Heart left ventricle (tissue), 16 donors: ENCODE measurements at regions of chr10 and their contacts with region 1.

Region 1: DNA sequence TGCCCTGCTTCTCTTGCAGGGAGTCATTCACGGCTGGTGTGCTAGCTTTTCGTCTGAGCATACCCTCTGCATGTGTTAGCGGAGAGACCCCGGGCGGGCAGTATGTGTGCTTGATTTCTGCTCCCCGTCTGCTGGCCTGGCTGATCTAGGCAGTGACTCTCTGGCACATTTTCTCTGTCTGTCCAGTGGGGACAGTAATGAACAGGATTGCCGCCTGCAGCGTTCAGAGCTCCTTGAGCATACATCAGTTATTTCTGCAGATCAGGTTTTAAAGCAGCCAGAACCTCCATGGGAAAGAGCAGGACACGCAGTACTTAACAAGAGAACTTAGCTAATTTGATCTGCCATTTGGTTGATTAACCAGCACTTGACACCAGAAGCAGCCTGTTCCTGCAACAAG is 242.5 kb downstream of the CELF2 start:
- DNase-seq: no peak
- ATAC-seq: peak in 2 of 4 donors; percentile 13 to 25
- H3K4me3 ChIP-seq: no peak overlapping the region
- H3K27ac ChIP-seq: peak overlapping the region in 3 of 12 donors; percentile 12 to 42 (median 34)
- H3K4me1 ChIP-seq: peaks cover 0 to 85% (median 41%) of the 10 kb centered on the region in 12 donors
- H3K27me3 ChIP-seq: no peaks in the 10 kb centered on the region
- CTCF ChIP-seq: peak in 3 of 12 donors; percentile 14 to 20 (median 19)
- POLR2A ChIP-seq: no peak

Region 2: GRCh38 chr10:10891124-10892082 is 368.8 kb before region 1 on chr10:
- intact Hi-C with region 1: loop called in 1 of 10 experiments (anchors 10 kb)
- DNase-seq: peak in 1 of 5 donors; percentile 31
- ATAC-seq: peak in 3 of 4 donors; percentile 32 to 64 (median 60)
- H3K4me3 ChIP-seq: no peak overlapping the region
- H3K27ac ChIP-seq: peak overlapping the region in 3 of 12 donors; percentile 59 to 67 (median 61)
- H3K4me1 ChIP-seq: peaks cover 0 to 31% (median 14%) of the 10 kb centered on the region in 12 donors
- H3K27me3 ChIP-seq: no peaks in the 10 kb centered on the region
- CTCF ChIP-seq: no peak
- POLR2A ChIP-seq: no peak

Region 3: DNA sequence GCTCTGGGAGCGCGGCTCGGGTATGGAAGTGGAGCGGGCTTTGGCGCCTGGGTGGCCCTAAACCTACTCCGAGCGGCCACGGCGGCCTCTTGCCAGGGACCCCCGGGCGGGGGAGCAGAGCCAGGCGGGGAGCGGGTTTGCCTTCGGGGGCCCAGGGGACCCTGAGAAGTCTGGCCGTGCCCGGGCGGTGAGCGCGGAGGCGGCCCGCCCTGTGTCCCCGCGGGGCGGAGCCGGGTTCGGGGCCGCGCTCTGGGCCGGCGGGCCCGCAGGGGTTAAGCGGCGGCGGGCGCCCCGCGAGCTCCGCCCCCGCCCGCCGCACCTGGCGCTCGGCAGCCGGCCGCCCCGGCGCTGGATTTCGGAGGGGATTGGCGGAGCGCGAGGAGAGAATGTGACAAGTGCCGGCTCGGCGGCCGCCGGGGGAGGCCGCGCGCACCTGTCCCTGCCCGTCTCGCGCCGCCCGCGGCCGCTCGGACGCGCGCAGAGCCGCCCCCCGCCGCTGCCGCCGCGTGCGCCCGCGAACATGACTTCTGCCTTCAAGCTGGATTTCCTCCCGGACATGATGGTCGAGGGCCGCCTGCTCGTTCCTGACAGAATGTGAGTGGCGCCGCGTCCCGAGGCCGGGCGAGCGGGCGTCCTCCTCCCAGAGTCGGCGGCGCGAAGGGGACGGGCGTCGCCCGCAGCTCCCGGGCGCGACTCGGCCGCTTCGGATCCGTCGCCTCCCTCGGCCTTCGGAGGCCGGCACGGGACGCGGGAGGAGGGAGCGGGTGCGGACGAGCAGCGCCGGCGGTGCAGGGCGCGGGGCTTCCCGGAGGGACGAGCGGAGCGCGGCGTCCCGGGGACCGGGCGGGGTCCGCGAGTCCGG is 242.4 kb before region 1 on chr10 and contains the start of gene CELF2:
- intact Hi-C with region 1: loop called in 3 of 10 experiments (anchors 5 to 10 kb)
- DNase-seq: peak; percentile 70 to 84 (median 82)
- ATAC-seq: peak; percentile 51 to 89 (median 76)
- H3K4me3 ChIP-seq: peak within 1 kb of the TSS; percentile 63 to 83 (median 76)
- H3K27ac ChIP-seq: peak within 1 kb of the TSS; percentile 75 to 95 (median 92)
- H3K4me1 ChIP-seq: peaks cover 0 to 72% (median 32%) of the 10 kb centered on the region in 12 donors
- H3K27me3 ChIP-seq: peaks cover 0 to 46% (median 0%) of the 10 kb centered on the region in 9 donors
- CTCF ChIP-seq: no peak
- POLR2A ChIP-seq: peak in 1 of 2 donors; percentile 15
- total RNA-seq, gene CELF2: 61.2 to 103 (median 73.3) TPM

Region 4: GRCh38 chr10:11045995-11046775 is 214.0 kb before region 1 on chr10:
- intact Hi-C with region 1: loop called in 4 of 10 experiments (anchors 10 kb)
- DNase-seq: peak; percentile 63 to 87 (median 81)
- ATAC-seq: peak; percentile 68 to 82 (median 78)
- H3K4me3 ChIP-seq: peak overlapping the region in 8 of 12 donors; percentile 8 to 41 (median 26)
- H3K27ac ChIP-seq: peak overlapping the region; percentile 55 to 87 (median 79)
- H3K4me1 ChIP-seq: peaks cover 0 to 92% (median 64%) of the 10 kb centered on the region in 12 donors
- H3K27me3 ChIP-seq: no peaks in the 10 kb centered on the region
- CTCF ChIP-seq: no peak
- POLR2A ChIP-seq: no peak

Region 5: GRCh38 chr10:11165591-11166543 is 94.3 kb before region 1 on chr10:
- intact Hi-C with region 1: loop called in 4 of 10 experiments (anchors 5 to 10 kb)
- DNase-seq: peak; percentile 57 to 83 (median 72)
- ATAC-seq: peak; percentile 22 to 76 (median 74)
- H3K4me3 ChIP-seq: peak overlapping the region; percentile 22 to 87 (median 70)
- H3K27ac ChIP-seq: peak overlapping the region; percentile 64 to 98 (median 86)
- H3K4me1 ChIP-seq: peaks cover 0 to 70% (median 36%) of the 10 kb centered on the region in 12 donors
- H3K27me3 ChIP-seq: no peaks in the 10 kb centered on the region
- CTCF ChIP-seq: peak in 9 of 12 donors; percentile 22 to 54 (median 34)
- POLR2A ChIP-seq: no peak

Region 6: DNA sequence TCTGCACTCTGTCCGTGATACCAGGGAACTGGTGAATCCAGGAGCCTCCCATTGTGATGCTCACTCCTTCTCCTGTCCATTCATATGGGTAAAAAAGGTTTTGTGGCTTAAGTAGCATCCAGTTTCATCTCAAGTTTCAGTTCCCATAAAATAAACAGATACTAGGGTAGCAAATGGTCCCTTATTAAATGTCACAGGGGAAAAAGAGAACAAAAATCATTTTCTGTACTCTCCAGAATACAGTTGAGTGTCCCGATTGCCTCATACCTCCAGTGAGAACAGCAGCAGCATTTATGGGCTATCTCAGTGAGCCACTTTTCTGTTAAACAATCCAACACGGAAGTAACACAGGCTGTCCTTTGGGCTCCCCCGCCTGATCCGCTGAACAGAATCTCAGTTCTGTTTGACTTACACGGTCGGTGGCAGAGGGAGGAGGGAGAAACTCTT is 62.9 kb before region 1 on chr10:
- intact Hi-C with region 1: loop called in 1 of 10 experiments (anchors 10 kb)
- DNase-seq: peak in 4 of 5 donors; percentile 44 to 64 (median 46)
- ATAC-seq: peak; percentile 71 to 87 (median 84)
- H3K4me3 ChIP-seq: peak overlapping the region in 1 of 12 donors; percentile 1
- H3K27ac ChIP-seq: peak overlapping the region in 10 of 12 donors; percentile 3 to 59 (median 21)
- H3K4me1 ChIP-seq: peaks cover 0 to 85% (median 44%) of the 10 kb centered on the region in 12 donors
- H3K27me3 ChIP-seq: no peaks in the 10 kb centered on the region
- CTCF ChIP-seq: no peak
- POLR2A ChIP-seq: no peak

Region 7: GRCh38 chr10:11424456-11425297 is 164.5 kb after region 1 on chr10:
- intact Hi-C with region 1: no loop called
- DNase-seq: peak in 3 of 5 donors; percentile 29 to 42 (median 35)
- ATAC-seq: peak in 3 of 4 donors; percentile 54 to 76 (median 62)
- H3K4me3 ChIP-seq: no peak overlapping the region
- H3K27ac ChIP-seq: no peak overlapping the region
- H3K4me1 ChIP-seq: peaks cover 0 to 9% (median 0%) of the 10 kb centered on the region in 12 donors
- H3K27me3 ChIP-seq: no peaks in the 10 kb centered on the region
- CTCF ChIP-seq: peak; percentile 55 to 85 (median 76)
- POLR2A ChIP-seq: no peak